ENCODE measurements at regions of chr16 and their contacts with region 1.

Region 1: DNA sequence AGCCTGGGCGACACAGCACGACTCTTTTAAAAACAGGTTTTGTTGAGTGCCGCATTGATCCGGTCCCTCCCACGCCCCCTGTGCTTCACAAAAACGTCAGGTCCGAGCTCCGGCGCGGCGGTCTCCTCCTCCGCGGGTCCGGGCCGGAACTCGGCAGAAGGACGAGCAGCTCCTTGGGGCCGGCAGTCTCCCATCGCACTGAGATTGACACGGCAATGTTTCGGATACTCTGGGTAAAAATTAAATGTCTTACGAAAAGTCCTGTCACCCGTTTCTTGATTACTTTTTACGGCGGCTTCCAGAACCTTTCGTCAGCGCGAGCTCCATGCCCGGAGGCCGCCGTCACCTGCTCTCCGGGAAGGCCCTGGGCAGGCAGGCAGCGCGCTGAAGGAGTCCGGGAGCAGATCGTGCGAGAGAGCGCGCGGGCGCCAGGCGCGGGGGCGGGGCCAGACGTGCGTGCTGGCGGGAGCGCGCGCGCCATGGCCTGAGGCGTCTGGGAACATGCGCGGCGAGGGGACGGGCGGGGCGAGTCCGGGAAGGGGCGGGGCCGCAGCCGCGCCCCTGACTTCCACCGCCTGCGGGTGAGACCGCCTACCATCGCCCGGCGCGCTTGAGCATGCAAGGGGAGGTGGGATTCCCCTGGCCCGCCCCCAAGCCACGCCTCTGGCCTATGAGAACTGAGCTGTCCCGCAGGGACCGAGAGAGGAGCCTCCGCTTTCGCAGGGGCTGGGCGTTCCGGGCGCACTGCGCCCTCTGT is 11.7 kb upstream of the SRL start:
- DNase-seq: peak; percentile 99
- H3K4me3 ChIP-seq: peak overlapping the region; percentile 29 to 73 (median 40)
- H3K27ac ChIP-seq: peak overlapping the region; percentile 7
- H3K4me1 ChIP-seq: no peaks in the 10 kb centered on the region
- H3K27me3 ChIP-seq: no peaks in the 10 kb centered on the region
- CTCF ChIP-seq: no peak
- POLR2A ChIP-seq: peak; percentile 83

Region 2: DNA sequence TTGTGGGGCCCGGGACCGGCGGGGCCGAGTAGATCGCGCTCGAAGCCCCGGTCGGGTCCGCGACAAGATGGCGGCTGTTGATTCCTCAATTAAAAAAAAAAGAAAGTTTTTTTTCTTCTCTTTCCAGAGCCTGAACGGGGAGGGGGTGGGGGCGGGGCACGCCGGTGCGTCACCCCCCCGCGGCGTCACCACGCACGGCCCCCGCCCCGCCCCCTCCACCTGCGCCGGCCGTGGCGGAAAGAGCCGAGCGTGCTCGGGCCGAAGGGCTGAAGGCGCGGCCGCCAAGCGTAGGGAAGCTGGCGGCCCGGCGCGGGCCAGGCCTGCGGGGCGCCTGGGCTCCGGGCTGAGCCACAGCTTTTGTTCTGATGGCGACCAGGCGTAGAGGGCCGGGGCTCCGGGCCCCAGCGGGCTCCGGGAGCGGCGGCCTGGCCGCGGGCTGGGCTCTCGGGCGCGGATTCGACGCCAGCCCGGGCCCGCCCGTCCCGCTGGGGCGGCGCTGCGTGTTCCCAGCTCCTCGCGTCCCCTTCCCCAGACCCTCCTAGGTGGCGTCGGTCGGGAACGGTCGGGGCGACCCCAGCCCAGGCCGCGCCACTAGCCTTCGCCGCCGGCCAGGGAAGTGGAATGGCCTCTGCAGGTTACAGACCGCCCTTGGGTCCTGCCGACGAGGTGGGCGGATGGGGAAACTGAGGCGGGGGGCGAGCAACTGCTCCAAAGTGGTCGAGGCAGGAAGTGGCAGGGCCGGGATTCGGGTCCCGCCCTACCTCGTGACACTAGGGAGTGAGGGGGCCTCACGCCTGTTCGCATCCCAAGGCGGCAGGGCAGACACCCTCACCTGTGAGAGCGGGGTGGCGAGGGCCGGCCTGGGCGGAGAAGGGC is 372.7 kb before region 1 on chr16 and contains the start of gene CREBBP:
- CTCF ChIA-PET with region 1: interaction called, 9 read pairs
- POLR2A ChIA-PET with region 1: no interaction called
- dilution Hi-C with region 1: no loop called
- intact Hi-C with region 1: loop called (anchors 5 kb)
- DNase-seq: peak; percentile 87
- H3K4me3 ChIP-seq: peak within 1 kb of the TSS; percentile 12 to 94 (median 84)
- H3K27ac ChIP-seq: peak within 1 kb of the TSS; percentile 67
- H3K4me1 ChIP-seq: peaks cover 8% of the 10 kb centered on the region
- H3K27me3 ChIP-seq: no peaks in the 10 kb centered on the region
- CTCF ChIP-seq: no peak
- POLR2A ChIP-seq: peak; percentile 95
- total RNA-seq, gene CREBBP: 71.4 and 72.7 TPM in 2 replicates

Region 3: GRCh38 chr16:3983081-3983520 is 270.5 kb before region 1 on chr16:
- CTCF ChIA-PET with region 1: interaction called, 110 read pairs
- POLR2A ChIA-PET with region 1: no interaction called
- dilution Hi-C with region 1: no loop called
- intact Hi-C with region 1: loop called (anchors 1 kb)
- DNase-seq: peak; percentile 72
- H3K4me3 ChIP-seq: no peak overlapping the region
- H3K27ac ChIP-seq: no peak overlapping the region
- H3K4me1 ChIP-seq: no peaks in the 10 kb centered on the region
- H3K27me3 ChIP-seq: no peaks in the 10 kb centered on the region
- CTCF ChIP-seq: peak; percentile 71 to 90
- POLR2A ChIP-seq: no peak

Region 4: GRCh38 chr16:4116337-4117249 is 137.0 kb before region 1 on chr16 and contains the start of gene ADCY9:
- CTCF ChIA-PET with region 1: interaction called, 12 read pairs
- POLR2A ChIA-PET with region 1: interaction called, 3 read pairs
- dilution Hi-C with region 1: no loop called
- intact Hi-C with region 1: loop called (anchors 2 kb)
- DNase-seq: peak; percentile 47
- H3K4me3 ChIP-seq: peak within 1 kb of the TSS; percentile 33 to 67 (median 42)
- H3K27ac ChIP-seq: peak within 1 kb of the TSS; percentile 15
- H3K4me1 ChIP-seq: peaks cover 17% of the 10 kb centered on the region
- H3K27me3 ChIP-seq: no peaks in the 10 kb centered on the region
- CTCF ChIP-seq: no peak
- POLR2A ChIP-seq: peak; percentile 47
- total RNA-seq, gene ADCY9: 13.1 and 14.0 TPM in 2 replicates

Region 5: DNA sequence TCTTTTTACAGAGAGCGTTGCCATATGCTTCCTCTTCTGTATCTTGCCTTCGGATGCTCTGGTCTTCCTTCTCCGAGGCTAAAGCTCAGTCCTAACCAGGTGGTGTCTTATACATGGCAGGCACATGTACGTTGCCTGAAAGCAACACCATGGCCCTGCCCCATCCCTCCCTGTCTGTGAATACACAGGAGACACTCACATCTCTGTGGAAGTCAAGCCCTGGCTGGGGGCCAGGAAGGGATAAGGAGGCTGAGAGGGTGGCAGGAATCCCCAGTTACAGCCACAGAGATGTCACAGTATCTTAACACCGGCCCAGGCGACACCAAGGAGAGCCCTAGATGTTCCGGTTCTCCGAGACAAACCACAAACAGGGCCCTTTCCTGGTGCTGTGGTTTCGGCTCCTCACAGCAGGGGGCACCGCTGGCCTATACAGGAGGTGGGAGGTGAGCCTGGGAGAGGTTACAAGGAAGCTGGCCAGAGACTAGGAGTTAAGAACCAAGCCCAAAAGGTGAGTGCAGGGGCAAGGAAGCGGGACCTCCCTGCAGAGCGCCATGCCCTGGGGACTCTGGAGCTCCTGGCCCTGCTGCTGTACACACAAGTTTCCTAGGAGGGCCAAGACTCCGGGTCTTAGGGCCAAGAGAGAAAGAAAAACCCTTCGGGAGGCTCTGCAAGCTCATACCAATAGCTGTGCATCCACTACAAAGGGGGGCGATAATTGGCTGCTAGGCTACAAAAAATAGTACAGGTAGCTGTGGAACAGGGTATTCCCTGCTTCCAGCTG is 53.4 kb before region 1 on chr16:
- CTCF ChIA-PET with region 1: interaction called, 77 read pairs
- POLR2A ChIA-PET with region 1: no interaction called
- dilution Hi-C with region 1: no loop called
- intact Hi-C with region 1: loop called (anchors 1 kb)
- DNase-seq: peak; percentile 62
- H3K4me3 ChIP-seq: no peak overlapping the region
- H3K27ac ChIP-seq: no peak overlapping the region
- H3K4me1 ChIP-seq: no peaks in the 10 kb centered on the region
- H3K27me3 ChIP-seq: no peaks in the 10 kb centered on the region
- CTCF ChIP-seq: peak; percentile 46 to 83
- POLR2A ChIP-seq: no peak

Region 6: DNA sequence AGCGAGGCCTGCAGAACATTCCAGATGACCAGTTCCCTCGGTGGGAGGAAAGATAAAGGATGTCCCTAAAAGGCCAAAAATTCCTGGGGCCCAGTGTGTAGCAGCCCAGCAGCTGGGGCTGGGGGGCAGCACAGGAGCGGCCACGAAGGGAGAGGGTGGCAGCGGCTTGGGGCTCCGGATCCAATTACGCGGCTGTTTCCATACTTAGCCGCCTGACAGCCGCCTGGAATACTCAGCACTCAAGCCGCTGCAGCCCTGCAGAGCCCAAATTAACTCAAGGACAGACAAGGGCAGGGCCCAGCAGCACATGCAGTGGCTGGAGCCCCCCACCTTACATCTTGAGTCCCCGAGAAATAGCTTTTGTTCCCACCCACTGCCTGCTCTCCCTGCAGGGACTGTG is 12.9 kb before region 1 on chr16:
- CTCF ChIA-PET with region 1: interaction called, 14 read pairs
- POLR2A ChIA-PET with region 1: no interaction called
- dilution Hi-C with region 1: no loop called
- intact Hi-C with region 1: no loop called
- DNase-seq: no peak
- H3K4me3 ChIP-seq: no peak overlapping the region
- H3K27ac ChIP-seq: no peak overlapping the region
- H3K4me1 ChIP-seq: peaks cover 7% of the 10 kb centered on the region
- H3K27me3 ChIP-seq: no peaks in the 10 kb centered on the region
- CTCF ChIP-seq: no peak
- POLR2A ChIP-seq: no peak

Region 7: GRCh38 chr16:4307215-4308037 is 53.9 kb after region 1 on chr16:
- CTCF ChIA-PET with region 1: interaction called, 10 read pairs
- POLR2A ChIA-PET with region 1: no interaction called
- dilution Hi-C with region 1: no loop called
- intact Hi-C with region 1: no loop called
- DNase-seq: peak; percentile 88
- H3K4me3 ChIP-seq: peak overlapping the region in 2 of 3 experiments; percentile 25 to 33
- H3K27ac ChIP-seq: peak overlapping the region; percentile 76
- H3K4me1 ChIP-seq: peaks cover 7% of the 10 kb centered on the region
- H3K27me3 ChIP-seq: no peaks in the 10 kb centered on the region
- CTCF ChIP-seq: no peak
- POLR2A ChIP-seq: no peak